ENCODE measurements at regions of chr20 and their contacts with region 1.

Region 1: GRCh38 chr20:46689082-46689754 is at the start of gene TP53RK:
- DNase-seq: peak; percentile 100
- ATAC-seq: peak; percentile 99
- H3K4me3 ChIP-seq: peak within 1 kb of the TSS; percentile 90
- H3K27ac ChIP-seq: peak within 1 kb of the TSS; percentile 85
- H3K4me1 ChIP-seq: peaks cover 2% of the 10 kb centered on the region
- H3K27me3 ChIP-seq: no peaks in the 10 kb centered on the region
- total RNA-seq, gene TP53RK: 8.5 to 9.9 (median 9.3) TPM

Region 2: GRCh38 chr20:46520976-46521579 is 168.1 kb before region 1 on chr20:
- intact Hi-C with region 1: loop called in 1 of 4 experiments (anchors 10 kb)
- DNase-seq: peak in 2 of 3 donors; percentile 50 to 65
- ATAC-seq: peak in 1 of 2 donors; percentile 43
- H3K4me3 ChIP-seq: no peak overlapping the region
- H3K27ac ChIP-seq: no peak overlapping the region
- H3K4me1 ChIP-seq: no peaks in the 10 kb centered on the region
- H3K27me3 ChIP-seq: no peaks in the 10 kb centered on the region

Region 3: GRCh38 chr20:46838011-46838410 is 148.8 kb after region 1 on chr20:
- intact Hi-C with region 1: no loop called
- DNase-seq: no peak
- ATAC-seq: no peak
- H3K4me3 ChIP-seq: no peak overlapping the region
- H3K27ac ChIP-seq: no peak overlapping the region
- H3K4me1 ChIP-seq: no peaks in the 10 kb centered on the region
- H3K27me3 ChIP-seq: no peaks in the 10 kb centered on the region

Measured in right cardiac atrium (tissue), 5 donors.